ENCODE measurements at regions of chr9 and their contacts with region 1.

Region 1: DNA sequence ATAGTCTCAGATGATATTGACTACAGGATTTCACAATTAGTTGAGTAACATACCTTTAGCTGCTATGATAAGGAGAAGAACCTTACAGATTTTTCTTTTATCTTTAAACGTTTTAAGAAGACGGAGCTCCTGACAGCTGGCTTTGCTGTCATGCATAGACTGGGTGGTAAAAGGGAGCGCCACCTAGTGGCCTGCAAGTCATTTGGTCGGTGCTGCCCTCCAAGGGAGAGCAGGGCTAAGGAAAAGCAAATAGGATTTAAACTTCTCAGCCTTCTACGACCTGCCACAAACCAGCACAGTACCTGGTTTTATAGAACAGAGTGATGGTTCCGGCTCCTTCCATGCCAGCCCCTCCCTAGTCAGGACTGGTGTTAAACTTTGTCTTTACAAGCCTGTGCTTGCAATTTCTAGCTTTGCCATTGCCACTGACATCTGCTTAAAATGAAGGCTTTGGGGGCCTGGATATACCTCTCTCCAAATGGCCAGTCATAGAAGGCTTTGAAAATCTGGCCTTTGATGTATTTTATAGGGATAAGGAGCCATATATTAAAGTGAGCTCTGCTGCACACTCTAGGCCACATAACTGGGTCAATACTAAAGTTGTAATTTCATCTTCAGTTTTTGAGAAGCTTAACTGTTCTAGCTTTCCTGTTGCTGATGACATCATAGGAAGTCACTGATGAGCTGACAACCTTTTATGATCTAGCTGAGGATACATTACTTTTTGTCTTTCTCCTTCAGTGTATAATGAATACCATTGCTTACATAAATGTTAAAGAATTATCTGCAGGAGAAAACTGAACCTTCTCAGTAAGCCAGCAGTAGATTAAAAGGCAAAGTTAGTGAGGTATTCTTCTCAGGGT is 31.1 kb upstream of the ADAMTSL1 start:
- DNase-seq: peak in 1 of 2 donors; percentile 83
- H3K4me3 ChIP-seq: peak overlapping the region in 1 of 2 donors; percentile 26
- H3K27ac ChIP-seq: peak overlapping the region; percentile 26 to 35
- H3K4me1 ChIP-seq: peaks cover 0 to 12% of the 10 kb centered on the region in 2 donors
- H3K27me3 ChIP-seq: no peaks in the 10 kb centered on the region
- CTCF ChIP-seq: peak; percentile 53 to 88 (median 88)

Region 2: GRCh38 chr9:18490635-18491370 is 47.9 kb after region 1 on chr9:
- intact Hi-C with region 1: loop called (anchors 5 kb)
- DNase-seq: peak; percentile 47 to 91
- H3K4me3 ChIP-seq: peak overlapping the region; percentile 24 to 48
- H3K27ac ChIP-seq: peak overlapping the region; percentile 83 to 88
- H3K4me1 ChIP-seq: peaks cover 3 to 36% of the 10 kb centered on the region in 2 donors
- H3K27me3 ChIP-seq: no peaks in the 10 kb centered on the region
- CTCF ChIP-seq: no peak

Region 3: GRCh38 chr9:18666986-18667772 is 224.3 kb after region 1 on chr9:
- intact Hi-C with region 1: loop called (anchors 10 kb)
- DNase-seq: no peak
- H3K4me3 ChIP-seq: no peak overlapping the region
- H3K27ac ChIP-seq: peak overlapping the region in 1 of 2 donors; percentile 39
- H3K4me1 ChIP-seq: peaks cover 7 to 8% of the 10 kb centered on the region in 2 donors
- H3K27me3 ChIP-seq: no peaks in the 10 kb centered on the region
- CTCF ChIP-seq: no peak

Region 4: DNA sequence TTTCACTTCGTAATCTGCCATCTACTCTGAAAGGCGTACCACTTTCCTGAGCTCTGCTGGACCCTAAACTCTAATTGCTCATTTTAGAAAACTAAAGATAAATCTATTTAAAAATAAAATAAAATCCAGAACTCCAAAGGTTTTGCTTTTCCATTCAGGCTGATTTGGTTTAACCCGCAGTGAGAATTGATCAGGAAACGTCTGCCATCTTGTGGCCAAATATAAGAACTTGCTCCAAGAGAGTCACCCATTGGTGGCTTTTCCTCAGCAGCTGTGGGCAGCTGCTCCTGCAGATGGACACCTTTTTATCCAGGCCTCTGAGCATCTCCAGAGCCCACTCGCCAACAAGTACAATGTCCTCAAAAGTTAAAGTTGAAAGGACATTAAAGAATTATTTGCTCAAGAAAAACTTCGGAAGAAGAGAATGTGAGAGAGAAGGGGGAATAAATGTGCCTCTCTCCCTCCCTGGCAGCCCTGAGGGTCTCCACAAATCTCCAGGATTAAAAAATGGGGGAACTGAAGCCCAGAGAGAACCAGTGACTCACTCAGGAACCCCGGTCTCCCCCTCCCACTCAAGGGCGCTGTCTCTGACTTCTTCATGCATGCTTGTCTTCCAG is 586.1 kb after region 1 on chr9:
- intact Hi-C with region 1: loop called (anchors 5 kb)
- DNase-seq: no peak
- H3K4me3 ChIP-seq: no peak overlapping the region
- H3K27ac ChIP-seq: no peak overlapping the region
- H3K4me1 ChIP-seq: peaks cover 0 to 4% of the 10 kb centered on the region in 2 donors
- H3K27me3 ChIP-seq: no peaks in the 10 kb centered on the region
- CTCF ChIP-seq: peak; percentile 62 to 83 (median 64)

Measured in ascending aorta (tissue), 2 donors.